ENCODE measurements at regions of chr4 and their contacts with region 1.

Region 1: DNA sequence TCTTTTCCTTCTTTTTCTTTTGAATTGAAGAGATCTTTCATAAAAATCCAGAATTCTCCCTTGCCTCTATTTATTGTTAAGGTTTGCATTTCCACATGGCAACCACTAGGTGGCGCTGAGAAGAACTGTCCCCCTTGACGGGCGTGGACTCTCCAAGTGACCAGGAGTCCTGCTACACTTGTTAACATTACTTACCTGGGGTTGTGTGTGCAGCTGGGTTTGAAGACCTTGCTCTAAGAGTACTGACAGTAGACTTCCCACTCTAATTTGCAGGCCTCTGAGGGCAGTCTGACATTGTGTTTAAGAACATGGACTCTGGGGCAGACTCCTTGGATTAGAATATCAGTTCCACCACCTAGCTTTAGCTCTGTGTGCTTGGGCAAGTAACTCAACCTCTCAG is 52.8 kb downstream of the GPRIN3 start:
- DNase-seq: peak; percentile 16
- H3K4me3 Mint-ChIP-seq: no peak overlapping the region
- H3K27ac Mint-ChIP-seq: peak overlapping the region; percentile 39
- H3K4me1 Mint-ChIP-seq: peaks cover 54% of the 10 kb centered on the region
- H3K27me3 Mint-ChIP-seq: no peaks in the 10 kb centered on the region

Region 2: DNA sequence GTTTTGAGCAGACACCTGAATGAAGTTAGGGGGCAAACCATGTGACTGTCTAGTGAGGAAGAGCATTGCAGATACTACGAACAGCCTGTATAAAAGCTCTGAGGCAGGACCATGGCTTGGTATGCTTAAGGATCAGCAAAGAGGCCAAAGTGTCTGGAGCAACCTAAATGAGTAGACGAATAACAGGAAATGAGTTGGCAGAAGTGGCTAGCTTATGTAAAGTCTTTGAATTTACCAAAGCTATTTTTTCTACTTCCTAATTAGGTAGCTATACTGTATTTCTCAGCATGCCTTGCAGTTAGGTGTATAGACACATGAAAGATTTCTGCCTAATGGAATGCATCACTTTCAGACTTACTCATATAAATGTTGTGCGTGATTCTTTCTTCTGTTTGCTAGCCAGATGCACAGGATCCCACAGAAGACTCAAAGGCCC is 62.1 kb after region 1 on chr4:
- intact Hi-C with region 1: loop called (anchors 2 kb)
- DNase-seq: no peak
- H3K4me3 Mint-ChIP-seq: peak overlapping the region; percentile 37
- H3K27ac Mint-ChIP-seq: peak overlapping the region; percentile 76
- H3K4me1 Mint-ChIP-seq: peaks cover 33% of the 10 kb centered on the region
- H3K27me3 Mint-ChIP-seq: no peaks in the 10 kb centered on the region